H1 (cell line): ENCODE measurements at regions of chr20 and their contacts with region 1.

Region 1: DNA sequence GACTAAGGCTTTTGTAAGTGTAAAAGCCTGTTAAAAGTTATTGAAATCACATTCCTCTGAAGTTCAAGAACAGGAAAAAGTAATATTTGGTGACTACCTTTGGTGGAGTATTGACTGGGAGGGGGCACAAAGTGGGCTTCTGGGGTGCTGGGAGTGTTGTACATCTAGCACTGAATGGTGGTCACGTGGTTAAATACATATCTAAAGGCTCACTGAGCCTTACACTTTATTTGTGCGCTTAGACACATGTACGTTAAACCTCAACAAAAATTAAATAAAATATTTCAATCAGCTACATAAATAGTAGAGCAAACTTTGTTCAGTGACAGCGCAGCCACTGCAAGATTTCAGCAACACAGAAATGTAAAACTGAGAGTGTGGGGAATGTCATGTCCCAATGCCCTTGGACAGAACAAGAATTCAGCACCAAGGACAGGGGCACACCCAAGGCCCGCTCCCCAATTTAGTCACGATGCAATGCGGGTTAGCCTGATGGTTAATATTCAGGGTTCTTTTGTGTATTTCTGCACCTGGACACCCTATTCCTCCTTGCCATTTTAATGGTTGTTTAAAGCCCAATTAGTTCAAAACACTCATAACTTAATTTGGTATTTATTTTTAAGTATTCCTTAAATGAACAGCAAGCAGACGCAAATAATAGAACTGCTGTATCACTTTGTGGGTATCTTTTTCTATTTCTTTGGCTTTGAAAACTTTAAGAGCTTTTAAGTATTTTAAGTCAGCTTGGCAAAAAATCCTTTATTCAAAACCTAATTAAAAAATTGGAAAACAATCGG is 37.4 kb downstream of the ANGPT4 start:
- DNase-seq: peak in 1 of 2 experiments; percentile 81
- H3K4me3 ChIP-seq: no peak overlapping the region
- H3K27ac ChIP-seq: no peak overlapping the region
- H3K4me1 ChIP-seq: no peaks in the 10 kb centered on the region; a peak in 1 of 7 replicates
- H3K27me3 ChIP-seq: 0 out of 7 replicates have a peak, but pooled peaks cover 0 to 2% (median 0%) of the 10 kb centered on the region in 4 experiments
- CTCF ChIP-seq: no peak
- EP300 ChIP-seq: no peak
- POLR2A ChIP-seq: no peak
- RAD21 ChIP-seq: no peak

Region 2: DNA sequence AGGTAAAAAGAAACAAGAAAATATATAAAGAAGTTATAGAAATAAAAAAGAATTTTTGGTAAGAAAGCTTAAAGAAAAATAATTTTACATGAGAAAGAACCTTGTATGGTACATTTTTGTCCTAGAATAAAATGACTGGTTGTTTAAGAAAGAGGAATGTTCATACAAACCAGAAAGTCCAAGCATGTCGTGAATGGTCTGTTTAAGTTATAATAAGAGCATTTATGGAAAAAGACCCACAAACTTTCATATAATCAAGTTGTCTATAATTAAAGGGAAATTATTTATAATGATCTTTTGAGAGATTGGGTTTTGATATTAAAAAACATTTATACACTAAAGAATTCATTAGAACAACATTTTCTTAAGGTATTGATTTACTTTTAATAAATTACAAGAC is 73.0 kb before region 1 on chr20:
- CTCF ChIA-PET with region 1: no interaction called
- POLR2A ChIA-PET with region 1: no interaction called
- DNase-seq: no peak
- H3K4me3 ChIP-seq: no peak overlapping the region
- H3K27ac ChIP-seq: no peak overlapping the region
- H3K4me1 ChIP-seq: no peaks in the 10 kb centered on the region
- H3K27me3 ChIP-seq: no peaks in the 10 kb centered on the region
- CTCF ChIP-seq: no peak
- EP300 ChIP-seq: no peak
- POLR2A ChIP-seq: no peak
- RAD21 ChIP-seq: no peak

Region 3: GRCh38 chr20:865440-865839 is 13.3 kb before region 1 on chr20:
- CTCF ChIA-PET with region 1: interaction called, 29 read pairs
- POLR2A ChIA-PET with region 1: no interaction called
- DNase-seq: no peak
- H3K4me3 ChIP-seq: no peak overlapping the region
- H3K27ac ChIP-seq: no peak overlapping the region
- H3K4me1 ChIP-seq: peaks cover 0 to 3% (median 1%) of the 10 kb centered on the region in 4 experiments; a peak in 2 of 7 replicates
- H3K27me3 ChIP-seq: no peaks in the 10 kb centered on the region; a peak in 3 of 7 replicates
- CTCF ChIP-seq: no peak
- EP300 ChIP-seq: no peak
- POLR2A ChIP-seq: no peak
- RAD21 ChIP-seq: no peak